ENCODE measurements at regions of chr21 and their contacts with region 1.

Region 1: DNA sequence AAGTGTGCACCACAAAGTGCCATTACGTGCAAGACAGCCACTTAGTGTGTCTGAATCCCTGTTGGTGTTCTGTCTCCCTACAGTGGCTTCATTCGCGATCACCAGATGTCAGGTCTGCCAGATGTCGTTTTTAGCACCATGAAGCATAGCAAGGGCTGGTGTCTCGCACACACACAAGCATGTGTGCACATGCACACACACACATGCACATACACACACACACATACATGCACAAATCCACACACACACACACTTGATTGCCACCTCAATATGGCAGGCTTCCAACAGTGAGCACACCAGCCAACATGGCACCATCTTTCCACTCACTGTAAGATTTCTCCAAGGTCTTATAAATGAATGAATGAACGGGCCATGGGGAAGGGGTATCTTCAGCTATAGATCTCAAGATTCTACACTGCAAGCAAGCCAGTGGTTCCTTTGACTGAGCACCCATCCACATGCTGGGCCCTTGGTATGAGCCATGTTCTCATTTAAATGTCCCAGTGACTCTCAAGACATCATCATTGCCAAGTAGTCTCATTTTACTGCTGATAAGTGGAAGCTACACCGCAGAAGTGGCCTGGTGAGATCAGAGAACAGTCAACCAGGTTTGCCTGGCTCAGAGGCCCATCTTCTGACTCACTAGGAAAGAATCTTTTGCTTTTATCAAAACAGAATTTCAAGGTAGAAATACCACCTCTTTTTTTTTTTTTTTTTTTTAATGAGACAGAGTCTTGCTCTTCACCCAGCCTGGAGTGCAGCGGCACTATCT is 84.9 kb downstream of the SIM2 start:
- DNase-seq: no peak
- ATAC-seq: no peak

Region 2: GRCh38 chr21:36830100-36830499 is 46.3 kb after region 1 on chr21:
- intact Hi-C with region 1: loop called (anchors 5 kb)
- DNase-seq: no peak
- ATAC-seq: peak; percentile 16

Measured in Right ventricle myocardium inferior (tissue), 1 donor.